HEK293T (cell line): ENCODE measurements at regions of chr17 and their contacts with region 1.

Region 1: GRCh38 chr17:17694169-17695081 is 13.2 kb downstream of the RAI1 start:
- DNase-seq: peak; percentile 82

Region 2: DNA sequence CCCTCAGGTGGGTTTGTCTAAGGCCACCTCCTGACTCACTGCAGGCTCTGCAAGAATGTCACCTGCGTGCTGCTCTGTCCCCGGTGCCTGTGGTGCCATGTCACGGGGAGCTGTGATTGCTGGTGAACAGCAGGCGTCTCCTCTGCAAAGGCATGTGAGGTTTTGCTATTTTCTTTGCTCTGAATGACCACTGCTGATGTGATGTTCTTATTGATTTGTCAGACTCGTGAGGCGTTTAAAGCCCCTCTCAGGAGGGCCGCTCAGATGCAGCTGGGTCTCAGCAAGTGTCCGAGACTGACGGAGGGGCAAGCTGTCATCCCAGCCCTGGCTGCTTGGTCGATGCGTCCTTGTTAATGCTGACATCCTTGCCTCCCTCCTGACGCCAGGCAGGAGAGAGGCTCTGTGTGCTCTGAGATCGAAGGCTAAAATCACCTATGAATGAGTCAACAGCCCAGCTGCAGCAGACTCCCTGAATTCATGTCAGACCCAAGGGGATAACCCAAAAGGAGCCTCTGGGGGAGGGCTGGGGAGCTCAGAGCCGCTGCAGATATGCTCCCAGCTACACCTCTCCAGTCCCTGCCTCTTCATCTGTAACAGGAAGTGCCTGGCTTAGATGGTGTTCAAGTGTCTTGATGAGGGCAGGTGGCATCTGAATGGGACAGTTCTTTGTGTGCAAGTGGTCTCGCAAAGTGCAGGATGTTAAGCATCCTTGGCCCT is 91.1 kb before region 1 on chr17:
- CTCF ChIA-PET with region 1: no interaction called
- POLR2A ChIA-PET with region 1: no interaction called
- DNase-seq: no peak

Region 3: DNA sequence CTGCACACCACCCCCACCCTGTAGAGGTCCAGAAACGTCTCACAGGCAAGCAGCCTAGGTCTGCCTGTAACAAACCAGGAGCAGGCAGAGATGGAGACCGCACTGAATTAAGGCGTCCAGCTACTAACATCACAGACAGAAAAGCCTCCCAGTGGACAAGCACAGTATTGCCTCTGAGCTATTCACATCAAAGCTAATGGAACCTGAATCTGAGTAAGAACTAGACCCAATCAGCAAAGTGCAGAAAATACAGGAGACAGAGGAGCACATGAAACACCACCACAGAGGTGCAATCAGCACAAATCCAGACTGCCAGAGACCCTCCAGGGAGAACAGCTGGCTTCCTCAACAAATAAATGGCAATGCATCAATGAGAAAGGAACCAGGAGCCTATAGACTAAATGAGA is 80.7 kb before region 1 on chr17:
- CTCF ChIA-PET with region 1: no interaction called
- POLR2A ChIA-PET with region 1: no interaction called
- DNase-seq: peak; percentile 79

Region 4: GRCh38 chr17:17681187-17681848 is 13.1 kb before region 1 on chr17 and contains the start of gene RAI1:
- CTCF ChIA-PET with region 1: interaction called, 4 read pairs
- POLR2A ChIA-PET with region 1: interaction called, 25 read pairs
- DNase-seq: peak; percentile 90